ENCODE measurements at regions of chr16 and their contacts with region 1.

Region 1: DNA sequence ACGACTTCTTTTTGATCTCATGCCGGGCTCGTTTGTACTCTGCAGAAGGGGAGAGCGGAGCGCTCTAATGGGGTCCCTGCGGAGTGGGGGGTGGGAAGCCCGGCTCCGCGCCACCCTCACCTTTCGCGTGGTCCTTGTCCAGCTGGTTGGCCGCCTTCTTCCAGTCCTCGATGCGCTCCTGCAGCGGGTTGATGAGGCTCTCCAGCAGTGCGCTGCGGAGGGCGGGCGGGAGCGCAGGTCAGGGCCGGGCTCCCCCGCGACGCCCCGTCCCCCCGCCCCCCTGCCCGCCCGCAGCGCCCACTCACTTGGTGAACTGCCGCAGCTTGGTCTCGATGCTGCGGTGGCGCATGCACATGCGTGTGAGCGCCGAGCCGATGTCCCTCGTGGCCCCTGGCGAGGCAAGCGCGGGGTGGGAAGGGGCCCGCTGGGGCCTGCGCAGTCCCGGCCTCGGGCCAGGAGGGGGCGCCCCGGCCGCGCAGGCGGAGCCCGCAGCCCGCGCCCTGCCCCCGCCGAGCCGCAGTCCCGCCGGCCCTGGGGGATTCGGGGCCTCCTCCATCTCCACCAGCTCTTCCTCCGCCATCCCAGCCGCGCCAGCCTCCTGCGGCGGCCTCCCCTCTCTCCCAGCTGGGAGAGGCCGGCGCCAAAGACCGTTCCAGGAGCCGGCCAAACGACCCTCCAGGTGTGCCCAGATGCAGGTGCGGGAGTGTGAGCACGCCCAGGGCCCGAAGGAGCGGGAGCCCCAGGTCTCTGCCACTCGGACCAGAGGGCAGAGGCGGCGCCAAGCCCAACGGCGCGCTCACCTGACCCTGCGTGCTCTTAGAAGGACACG is 6.0 kb downstream of the MTSS2 start:
- DNase-seq: no peak
- H3K4me3 ChIP-seq: no peak overlapping the region
- H3K27ac ChIP-seq: peak overlapping the region; percentile 91 to 99
- H3K4me1 ChIP-seq: peaks cover 5 to 57% (median 47%) of the 10 kb centered on the region in 4 donors
- H3K27me3 ChIP-seq: no peaks in the 10 kb centered on the region
- CTCF ChIP-seq: peak; percentile 48 to 75

Region 2: GRCh38 chr16:69595127-69596036 is 1084.5 kb before region 1 on chr16:
- intact Hi-C with region 1: no loop called
- DNase-seq: no peak
- H3K4me3 ChIP-seq: no peak overlapping the region
- H3K27ac ChIP-seq: no peak overlapping the region
- H3K4me1 ChIP-seq: peaks cover 0 to 23% (median 7%) of the 10 kb centered on the region in 4 donors
- H3K27me3 ChIP-seq: no peaks in the 10 kb centered on the region
- CTCF ChIP-seq: no peak

Region 3: GRCh38 chr16:70737377-70738082 is 57.6 kb after region 1 on chr16:
- intact Hi-C with region 1: loop called (anchors 5 kb)
- DNase-seq: peak; percentile 79 to 95
- H3K4me3 ChIP-seq: no peak overlapping the region
- H3K27ac ChIP-seq: peak overlapping the region; percentile 86 to 96
- H3K4me1 ChIP-seq: peaks cover 6 to 47% (median 41%) of the 10 kb centered on the region in 4 donors
- H3K27me3 ChIP-seq: no peaks in the 10 kb centered on the region
- CTCF ChIP-seq: no peak

Region 4: GRCh38 chr16:70754851-70755600 is 75.1 kb after region 1 on chr16:
- intact Hi-C with region 1: loop called (anchors 5 kb)
- DNase-seq: no peak
- H3K4me3 ChIP-seq: no peak overlapping the region
- H3K27ac ChIP-seq: peak overlapping the region; percentile 68 to 78
- H3K4me1 ChIP-seq: peaks cover 11 to 70% (median 62%) of the 10 kb centered on the region in 4 donors
- H3K27me3 ChIP-seq: no peaks in the 10 kb centered on the region
- CTCF ChIP-seq: no peak

Region 5: DNA sequence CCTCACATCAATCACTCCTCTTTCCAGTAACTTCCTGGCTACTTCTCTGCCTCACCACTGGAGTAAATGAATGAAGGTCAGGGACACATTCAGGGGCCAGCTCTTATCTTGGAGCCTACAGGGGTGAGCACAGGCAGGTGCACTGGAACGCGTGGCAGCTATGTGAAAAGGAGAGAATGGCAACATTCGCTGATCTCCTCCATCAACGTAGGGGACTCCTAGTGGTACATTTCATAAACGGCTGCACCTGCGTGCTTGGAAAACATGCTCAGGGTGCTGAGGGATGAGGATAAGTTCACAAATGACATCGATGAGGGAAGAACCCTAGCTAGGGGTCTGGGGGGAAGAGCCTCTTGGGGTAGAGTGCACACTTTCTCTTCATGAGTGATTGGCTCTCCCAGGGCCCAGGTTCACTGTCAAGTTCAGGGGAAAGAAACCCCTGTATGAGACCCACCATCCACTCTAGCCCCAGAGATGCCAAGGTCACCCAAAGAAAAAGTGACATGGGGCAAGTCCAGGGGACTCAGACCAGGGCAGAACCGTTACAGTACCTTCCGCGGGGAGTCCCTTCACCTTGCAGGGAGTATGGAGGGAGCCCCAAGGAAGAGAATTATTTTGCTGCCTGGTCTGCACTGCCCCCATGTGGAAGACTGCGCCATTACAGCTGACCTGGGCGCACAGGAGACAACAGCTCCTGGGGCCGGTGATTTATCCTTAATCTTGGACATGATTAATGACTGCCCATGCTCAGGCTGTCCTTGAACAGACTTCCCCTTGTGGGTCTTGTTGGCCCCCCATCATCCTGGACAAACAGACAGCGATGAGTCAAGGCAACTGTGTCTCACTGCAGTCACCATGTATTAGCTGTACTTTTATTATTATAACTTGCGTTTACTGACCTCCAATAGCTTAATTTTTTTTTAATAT is 91.0 kb after region 1 on chr16:
- intact Hi-C with region 1: loop called (anchors 2 kb)
- DNase-seq: peak; percentile 42 to 79
- H3K4me3 ChIP-seq: no peak overlapping the region
- H3K27ac ChIP-seq: no peak overlapping the region
- H3K4me1 ChIP-seq: peaks cover 0 to 19% (median 4%) of the 10 kb centered on the region in 4 donors
- H3K27me3 ChIP-seq: no peaks in the 10 kb centered on the region
- CTCF ChIP-seq: peak; percentile 94 to 99